ENCODE measurements at regions of chr10 and their contacts with region 1.

Region 1: GRCh38 chr10:65497837-65498236 is 1428.0 kb upstream of the LRRTM3 start:
- DNase-seq: no peak
- ATAC-seq: no peak
- H3K4me3 ChIP-seq: no peak overlapping the region
- H3K4me3 Mint-ChIP-seq: no peak overlapping the region
- H3K27ac ChIP-seq: no peak overlapping the region
- H3K27ac Mint-ChIP-seq: no peak overlapping the region
- H3K4me1 ChIP-seq: no peaks in the 10 kb centered on the region
- H3K4me1 Mint-ChIP-seq: no peaks in the 10 kb centered on the region
- H3K27me3 ChIP-seq: no peaks in the 10 kb centered on the region
- H3K27me3 Mint-ChIP-seq: no peaks in the 10 kb centered on the region
- CTCF ChIP-seq: no peak

Region 2: GRCh38 chr10:65518379-65518778 is 20.5 kb after region 1 on chr10:
- CTCF ChIA-PET with region 1: no interaction called
- POLR2A ChIA-PET with region 1: no interaction called
- intact Hi-C with region 1: loop called in 1 of 2 experiments (anchors 1 kb)
- DNase-seq: no peak
- ATAC-seq: no peak
- H3K4me3 ChIP-seq: no peak overlapping the region
- H3K4me3 Mint-ChIP-seq: no peak overlapping the region
- H3K27ac ChIP-seq: no peak overlapping the region
- H3K27ac Mint-ChIP-seq: no peak overlapping the region
- H3K4me1 ChIP-seq: no peaks in the 10 kb centered on the region
- H3K4me1 Mint-ChIP-seq: no peaks in the 10 kb centered on the region
- H3K27me3 ChIP-seq: no peaks in the 10 kb centered on the region
- H3K27me3 Mint-ChIP-seq: no peaks in the 10 kb centered on the region
- CTCF ChIP-seq: no peak

Measured in CD8-positive, alpha-beta T cell (primary cell).